Endothelial cell of umbilical vein (primary cell): ENCODE measurements at regions of chr1 and their contacts with region 1.

Region 1: DNA sequence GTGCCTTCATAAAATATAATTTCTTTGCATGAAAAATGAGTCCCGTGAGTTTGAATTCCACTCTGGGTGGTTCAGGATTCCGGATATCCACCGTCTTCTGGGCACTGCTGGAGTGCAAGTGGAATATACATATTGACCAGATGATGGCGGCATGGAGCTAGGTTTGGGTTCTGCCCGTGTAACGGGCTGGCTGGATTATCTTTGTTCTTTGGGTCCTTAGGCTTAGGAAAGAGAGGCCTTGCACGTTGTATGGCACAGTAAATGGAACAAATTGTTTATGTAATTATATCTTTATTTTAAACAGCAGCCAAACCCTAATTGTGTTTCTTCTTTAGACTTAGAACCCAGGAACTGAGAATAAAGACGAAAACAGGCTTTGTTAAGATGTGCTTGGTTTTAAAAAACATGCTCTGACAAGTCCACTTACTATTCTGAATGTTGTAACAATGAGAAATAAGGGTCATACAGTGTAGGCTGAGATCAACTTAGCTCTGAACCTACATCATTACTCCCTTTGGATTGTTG is 13.5 kb upstream of the ACBD6 start:
- DNase-seq: peak; percentile 91
- H3K4me3 ChIP-seq: no peak overlapping the region
- H3K27ac ChIP-seq: peak overlapping the region; percentile 52
- H3K4me1 ChIP-seq: peaks cover 29% of the 10 kb centered on the region
- H3K27me3 ChIP-seq: no peaks in the 10 kb centered on the region
- CTCF ChIP-seq: peak; percentile 68 to 73
- POLR2A ChIP-seq: no peak

Region 2: GRCh38 chr1:180155182-180155682 is 360.7 kb before region 1 on chr1:
- CTCF ChIA-PET with region 1: no interaction called
- POLR2A ChIA-PET with region 1: no interaction called
- dilution Hi-C with region 1: no loop called
- intact Hi-C with region 1: no loop called
- DNase-seq: peak; percentile 24
- H3K4me3 ChIP-seq: peak overlapping the region; percentile 43 to 90 (median 74)
- H3K27ac ChIP-seq: peak overlapping the region; percentile 1
- H3K4me1 ChIP-seq: peaks cover 60% of the 10 kb centered on the region
- H3K27me3 ChIP-seq: no peaks in the 10 kb centered on the region
- CTCF ChIP-seq: no peak
- POLR2A ChIP-seq: no peak

Region 3: GRCh38 chr1:180502360-180503273 is 13.3 kb before region 1 on chr1 and contains the start of gene ACBD6:
- CTCF ChIA-PET with region 1: interaction called, 15 read pairs
- POLR2A ChIA-PET with region 1: interaction called, 3 read pairs
- dilution Hi-C with region 1: no loop called
- intact Hi-C with region 1: no loop called
- DNase-seq: peak; percentile 93
- H3K4me3 ChIP-seq: peak within 1 kb of the TSS; percentile 32 to 81 (median 81)
- H3K27ac ChIP-seq: peak within 1 kb of the TSS; percentile 60
- H3K4me1 ChIP-seq: peaks cover 26% of the 10 kb centered on the region
- H3K27me3 ChIP-seq: no peaks in the 10 kb centered on the region
- CTCF ChIP-seq: peak in 1 of 2 donors; percentile 15
- POLR2A ChIP-seq: peak; percentile 18
- total RNA-seq, gene ACBD6: 52.8 and 56.4 TPM in 2 replicates

Region 4: GRCh38 chr1:180631766-180632325 is 115.9 kb after region 1 on chr1 and contains the start of gene XPR1:
- CTCF ChIA-PET with region 1: interaction called, 9 read pairs
- POLR2A ChIA-PET with region 1: interaction called, 7 read pairs
- dilution Hi-C with region 1: no loop called
- intact Hi-C with region 1: loop called (anchors 2 kb)
- DNase-seq: peak; percentile 99
- H3K4me3 ChIP-seq: peak within 1 kb of the TSS; percentile 71 to 90 (median 87)
- H3K27ac ChIP-seq: peak within 1 kb of the TSS; percentile 34
- H3K4me1 ChIP-seq: peaks cover 13% of the 10 kb centered on the region
- H3K27me3 ChIP-seq: peaks cover 3 to 5% of the 10 kb centered on the region in 2 experiments
- CTCF ChIP-seq: peak in 1 of 2 donors; percentile 26
- POLR2A ChIP-seq: peak; percentile 52
- total RNA-seq, gene XPR1: 26.7 and 29.3 TPM in 2 replicates

Region 5: DNA sequence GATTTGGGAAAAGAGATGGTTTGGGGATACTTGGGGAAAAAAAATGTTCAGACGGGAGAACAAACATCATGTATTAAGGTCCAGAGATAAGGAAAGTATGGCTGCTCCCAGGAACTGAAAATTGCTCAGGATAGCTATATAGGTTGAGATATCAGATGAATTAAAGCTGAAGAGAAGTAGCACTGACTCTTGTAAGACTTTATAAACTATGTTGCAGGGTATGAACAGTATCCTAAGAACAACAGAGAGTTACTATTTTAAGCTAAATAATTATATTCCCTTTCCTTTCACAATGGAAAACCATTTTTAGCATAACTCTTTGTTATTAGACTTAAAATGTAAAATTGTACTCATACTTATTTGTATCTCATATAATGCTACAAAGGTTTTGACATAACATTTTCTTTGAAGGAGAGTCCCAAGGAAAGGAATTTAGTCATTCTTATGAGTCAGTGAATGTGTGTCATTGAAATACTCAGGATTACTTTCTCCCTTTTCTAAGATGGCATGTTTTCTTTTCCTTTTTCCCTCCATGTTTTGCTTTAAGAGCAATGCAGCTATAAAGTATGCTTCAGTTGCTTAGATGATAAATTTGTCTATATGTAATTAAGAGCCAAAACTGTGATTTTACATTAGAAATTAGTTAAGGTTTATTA is 257.4 kb after region 1 on chr1:
- CTCF ChIA-PET with region 1: no interaction called
- POLR2A ChIA-PET with region 1: no interaction called
- dilution Hi-C with region 1: no loop called
- intact Hi-C with region 1: loop called (anchors 5 kb)
- DNase-seq: peak; percentile 64
- H3K4me3 ChIP-seq: no peak overlapping the region
- H3K27ac ChIP-seq: no peak overlapping the region
- H3K4me1 ChIP-seq: peaks cover 7% of the 10 kb centered on the region
- H3K27me3 ChIP-seq: no peaks in the 10 kb centered on the region
- CTCF ChIP-seq: no peak
- POLR2A ChIP-seq: no peak

Region 6: DNA sequence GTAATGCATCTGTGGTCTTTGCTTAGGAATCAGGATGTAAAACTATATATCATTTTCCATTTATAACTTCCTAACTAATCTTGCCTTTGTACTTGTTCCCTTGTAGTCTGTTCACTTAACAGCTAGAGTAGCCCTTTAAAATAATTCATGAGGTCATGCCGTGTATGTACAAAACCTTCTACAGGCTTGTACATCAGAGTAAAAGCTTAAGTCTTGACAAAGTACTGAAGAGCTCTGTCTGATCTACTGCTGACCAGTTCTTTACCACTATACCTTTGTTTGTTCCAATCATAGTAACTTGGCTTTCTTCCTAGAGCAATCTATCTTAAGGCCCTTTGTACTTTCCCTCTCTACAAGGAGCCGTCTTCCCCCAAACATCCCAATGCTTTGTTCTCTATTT is 306.0 kb after region 1 on chr1:
- CTCF ChIA-PET with region 1: no interaction called
- POLR2A ChIA-PET with region 1: no interaction called
- dilution Hi-C with region 1: no loop called
- intact Hi-C with region 1: no loop called
- DNase-seq: no peak
- H3K4me3 ChIP-seq: no peak overlapping the region
- H3K27ac ChIP-seq: no peak overlapping the region
- H3K4me1 ChIP-seq: no peaks in the 10 kb centered on the region
- H3K27me3 ChIP-seq: no peaks in the 10 kb centered on the region
- CTCF ChIP-seq: no peak
- POLR2A ChIP-seq: no peak

Region 7: GRCh38 chr1:181166377-181167196 is 650.7 kb after region 1 on chr1:
- CTCF ChIA-PET with region 1: interaction called, 4 read pairs
- POLR2A ChIA-PET with region 1: no interaction called
- dilution Hi-C with region 1: no loop called
- intact Hi-C with region 1: loop called (anchors 1 kb)
- DNase-seq: peak; percentile 74
- H3K4me3 ChIP-seq: no peak overlapping the region
- H3K27ac ChIP-seq: no peak overlapping the region
- H3K4me1 ChIP-seq: no peaks in the 10 kb centered on the region
- H3K27me3 ChIP-seq: peaks cover 2 to 10% of the 10 kb centered on the region in 2 experiments
- CTCF ChIP-seq: peak; percentile 71 to 82
- POLR2A ChIP-seq: no peak